Calu3 (cell line): ENCODE measurements at regions of chr14 and their contacts with region 1.

Region 1: DNA sequence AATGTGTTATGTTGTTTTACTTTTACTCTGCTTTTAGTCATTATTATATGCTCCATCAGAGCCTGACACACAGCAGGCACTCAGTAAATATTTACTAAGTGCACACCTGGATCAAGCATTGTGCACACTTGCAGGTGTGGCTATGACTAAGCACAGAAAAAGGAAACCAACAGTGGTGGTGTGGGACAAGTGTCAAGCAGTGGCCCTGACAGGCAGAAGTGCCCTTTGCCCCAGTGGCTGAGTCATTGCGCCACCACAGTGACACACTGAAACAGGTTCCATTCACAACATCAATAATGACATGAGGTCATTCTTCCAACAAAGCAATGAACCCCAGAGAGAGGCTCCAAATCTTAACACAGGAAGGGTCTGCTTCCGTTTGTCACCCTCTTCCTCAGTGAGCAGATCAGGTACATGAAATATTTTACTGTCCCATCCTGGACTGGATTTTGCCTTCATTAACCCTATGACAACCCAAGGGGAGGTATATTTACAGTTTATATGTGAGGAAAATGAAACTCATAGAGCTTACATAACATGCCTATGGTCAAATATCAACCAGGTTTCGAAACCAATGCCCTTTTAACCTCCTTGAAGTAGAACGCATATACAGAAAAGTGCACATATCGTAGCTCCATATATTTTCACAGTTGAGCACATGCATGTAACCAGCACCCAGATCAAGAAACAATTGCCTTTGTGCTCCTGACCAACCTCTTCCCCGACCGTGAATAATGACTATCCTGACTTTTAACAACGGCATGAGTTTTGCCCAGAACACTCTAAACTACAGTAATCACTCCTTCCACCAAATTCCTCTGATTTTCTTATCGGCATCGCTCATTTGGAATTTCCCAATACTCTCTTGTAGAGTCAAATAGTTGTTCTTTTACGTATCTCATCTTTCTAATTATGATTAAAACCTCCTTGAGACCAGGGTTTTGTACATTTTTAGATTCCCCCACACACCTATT is 82.8 kb upstream of the GTF2A1 start:
- DNase-seq: peak; percentile 93
- H3K4me3 Mint-ChIP-seq: peak overlapping the region; percentile 36
- H3K27ac Mint-ChIP-seq: peak overlapping the region; percentile 72
- H3K4me1 Mint-ChIP-seq: peaks cover 42% of the 10 kb centered on the region
- H3K27me3 Mint-ChIP-seq: no peaks in the 10 kb centered on the region
- CTCF ChIP-seq: no peak

Region 2: DNA sequence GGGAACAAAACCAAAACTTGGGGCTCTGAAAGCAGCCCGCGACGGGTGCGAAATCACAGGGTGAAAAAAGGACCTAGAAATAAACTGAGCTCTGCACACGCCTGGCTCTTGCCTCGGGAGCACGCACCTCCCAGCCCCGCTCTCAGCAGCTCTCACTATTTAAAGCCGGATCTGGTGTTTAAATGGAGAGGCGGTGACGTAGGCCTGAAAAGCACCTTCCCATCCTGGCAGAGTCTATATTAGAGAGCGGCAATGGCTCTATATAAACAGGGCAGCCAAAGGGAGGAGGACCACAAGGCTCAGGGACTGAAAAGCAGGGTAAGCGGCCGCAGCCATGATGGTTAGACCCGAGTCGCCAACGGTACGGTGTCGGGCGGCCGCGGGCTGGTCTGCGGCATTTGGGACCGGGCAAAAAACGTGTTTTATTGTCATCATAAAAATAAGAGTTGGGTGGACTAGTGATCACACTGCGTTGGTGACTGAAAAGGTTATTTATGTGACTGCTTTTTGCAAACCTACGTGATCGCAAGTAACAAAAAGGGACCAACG is 84.3 kb before region 1 on chr14:
- CTCF ChIA-PET with region 1: no interaction called
- intact Hi-C with region 1: loop called (anchors 5 kb)
- DNase-seq: peak; percentile 82
- H3K4me3 Mint-ChIP-seq: peak overlapping the region; percentile 89
- H3K27ac Mint-ChIP-seq: peak overlapping the region; percentile 98
- H3K4me1 Mint-ChIP-seq: peaks cover 13% of the 10 kb centered on the region
- H3K27me3 Mint-ChIP-seq: no peaks in the 10 kb centered on the region
- CTCF ChIP-seq: no peak

Region 3: GRCh38 chr14:81324018-81324417 is 20.5 kb after region 1 on chr14:
- CTCF ChIA-PET with region 1: no interaction called
- intact Hi-C with region 1: loop called (anchors 2 kb)
- DNase-seq: peak; percentile 73
- H3K4me3 Mint-ChIP-seq: peak overlapping the region; percentile 73
- H3K27ac Mint-ChIP-seq: peak overlapping the region; percentile 66
- H3K4me1 Mint-ChIP-seq: peaks cover 48% of the 10 kb centered on the region
- H3K27me3 Mint-ChIP-seq: no peaks in the 10 kb centered on the region
- CTCF ChIP-seq: no peak

Region 4: DNA sequence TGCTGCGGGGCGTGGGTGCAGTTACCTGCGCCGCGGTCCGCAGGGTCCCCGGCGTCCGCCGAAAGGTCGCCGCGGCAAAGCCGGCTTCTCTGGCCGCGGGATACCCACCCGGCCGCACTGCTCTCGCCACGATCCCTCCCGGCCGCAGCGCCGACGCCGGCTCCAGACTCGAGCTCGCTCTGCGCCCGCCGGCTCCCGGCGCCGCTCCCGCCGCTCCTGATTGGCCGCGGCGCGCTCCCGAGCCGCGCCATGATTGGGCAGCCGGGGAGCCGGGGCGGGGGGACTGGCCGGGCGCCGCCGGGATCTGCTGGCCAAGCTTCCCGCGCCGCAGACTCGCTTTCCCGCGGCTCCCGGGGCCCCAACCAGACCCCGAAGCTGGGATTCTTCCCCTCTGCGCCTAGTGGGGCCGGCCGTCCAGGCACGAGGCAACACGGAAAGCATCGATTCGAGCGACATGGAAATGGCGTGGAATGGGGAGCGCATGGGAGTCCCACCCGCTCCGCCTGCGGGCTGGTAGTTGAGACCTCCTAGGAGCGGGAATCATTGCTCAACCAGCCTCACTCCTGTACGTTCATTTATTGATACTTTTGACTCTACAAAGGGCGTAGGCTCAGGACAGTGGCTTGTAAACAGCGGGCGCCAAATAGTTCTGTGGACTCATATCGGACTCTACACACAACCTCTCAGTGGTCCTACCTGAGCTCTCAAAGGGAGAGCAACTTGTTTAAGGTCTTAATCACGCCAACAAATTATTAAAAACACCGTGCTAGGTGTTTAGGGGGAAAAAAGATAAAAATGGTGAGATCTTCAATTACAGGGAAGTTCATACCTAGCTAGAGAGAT is 133.0 kb after region 1 on chr14:
- CTCF ChIA-PET with region 1: interaction called, 6 read pairs
- intact Hi-C with region 1: loop called (anchors 2 kb)
- DNase-seq: peak; percentile 87
- H3K4me3 Mint-ChIP-seq: peak overlapping the region; percentile 84
- H3K27ac Mint-ChIP-seq: no peak overlapping the region
- H3K4me1 Mint-ChIP-seq: peaks cover 16% of the 10 kb centered on the region
- H3K27me3 Mint-ChIP-seq: peaks cover 46% of the 10 kb centered on the region
- CTCF ChIP-seq: no peak